K562 (cell line): ENCODE measurements at regions of chr13 and their contacts with region 1.

Region 1: GRCh38 chr13:85806553-85807175 is 7.4 kb upstream of the SLITRK6 start:
- DNase-seq: peak in 3 of 4 experiments; percentile 4 to 16 (median 6)
- ATAC-seq: no peak
- H3K4me3 ChIP-seq: no peak overlapping the region
- H3K27ac ChIP-seq: no peak overlapping the region
- H3K4me1 ChIP-seq: no peaks in the 10 kb centered on the region
- H3K27me3 ChIP-seq: no peaks in the 10 kb centered on the region
- CTCF ChIP-seq: peak in 1 of 3 experiments; percentile 38; a peak in 2 of 6 replicates
- EP300 ChIP-seq: no peak
- POLR2A ChIP-seq: no peak
- RAD21 ChIP-seq: peak; percentile 62 to 65

Region 2: GRCh38 chr13:84896128-84896527 is 910.5 kb before region 1 on chr13:
- CTCF ChIA-PET with region 1: no interaction called
- POLR2A ChIA-PET with region 1: no interaction called
- in situ Hi-C with region 1: loop called (anchors 25 kb)
- intact Hi-C with region 1: loop called (anchors 1 kb)
- DNase-seq: peak; percentile 3 to 55 (median 5)
- ATAC-seq: no peak
- H3K4me3 ChIP-seq: no peak overlapping the region
- H3K27ac ChIP-seq: no peak overlapping the region
- H3K4me1 ChIP-seq: no peaks in the 10 kb centered on the region
- H3K27me3 ChIP-seq: no peaks in the 10 kb centered on the region
- CTCF ChIP-seq: peak; percentile 14 to 55 (median 32); a peak in 3 of 6 replicates
- EP300 ChIP-seq: no peak
- POLR2A ChIP-seq: no peak
- RAD21 ChIP-seq: peak; percentile 59 to 70

Region 3: GRCh38 chr13:84917252-84917878 is 889.3 kb before region 1 on chr13:
- CTCF ChIA-PET with region 1: interaction called, 5 read pairs
- POLR2A ChIA-PET with region 1: no interaction called
- in situ Hi-C with region 1: loop called (anchors 25 kb)
- intact Hi-C with region 1: no loop called
- DNase-seq: no peak
- ATAC-seq: no peak
- H3K4me3 ChIP-seq: no peak overlapping the region
- H3K27ac ChIP-seq: no peak overlapping the region
- H3K4me1 ChIP-seq: no peaks in the 10 kb centered on the region
- H3K27me3 ChIP-seq: no peaks in the 10 kb centered on the region
- CTCF ChIP-seq: no peak
- EP300 ChIP-seq: no peak
- POLR2A ChIP-seq: no peak
- RAD21 ChIP-seq: no peak

Region 4: GRCh38 chr13:85626603-85627002 is 180.1 kb before region 1 on chr13:
- CTCF ChIA-PET with region 1: no interaction called
- POLR2A ChIA-PET with region 1: no interaction called
- in situ Hi-C with region 1: no loop called
- intact Hi-C with region 1: no loop called
- DNase-seq: no peak
- ATAC-seq: no peak
- H3K4me3 ChIP-seq: no peak overlapping the region
- H3K27ac ChIP-seq: no peak overlapping the region
- H3K4me1 ChIP-seq: no peaks in the 10 kb centered on the region
- H3K27me3 ChIP-seq: no peaks in the 10 kb centered on the region
- CTCF ChIP-seq: no peak
- EP300 ChIP-seq: no peak
- POLR2A ChIP-seq: no peak
- RAD21 ChIP-seq: no peak